GM10248 (cell line): ENCODE measurements at regions of chr1 and their contacts with region 1.

Region 1: DNA sequence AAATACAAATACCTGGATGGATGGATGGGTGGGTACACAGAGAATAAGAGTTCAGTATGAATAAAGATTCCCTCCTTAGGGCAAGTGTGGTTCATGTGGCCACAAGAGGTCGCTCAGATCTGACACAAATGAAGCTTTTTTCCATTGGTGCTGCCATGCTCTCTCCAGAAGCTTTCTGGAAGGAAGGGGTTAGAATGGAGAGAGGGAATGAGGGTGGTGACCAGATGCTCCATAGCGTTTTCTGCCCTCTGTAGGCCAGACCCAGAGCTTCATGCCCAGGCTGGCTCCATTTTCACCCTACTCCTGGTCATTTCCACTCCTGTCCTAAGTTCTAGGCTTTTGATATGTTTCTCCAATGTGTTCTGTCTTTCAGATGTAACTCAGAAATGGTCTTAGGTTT is 3.3 kb upstream of the FCRL6 start:
- DNase-seq: peak; percentile 67
- CTCF ChIP-seq: peak; percentile 57

Region 2: GRCh38 chr1:159580340-159580739 is 218.6 kb before region 1 on chr1:
- CTCF ChIA-PET with region 1: no interaction called
- POLR2A ChIA-PET with region 1: no interaction called
- DNase-seq: no peak
- CTCF ChIP-seq: no peak

Region 3: DNA sequence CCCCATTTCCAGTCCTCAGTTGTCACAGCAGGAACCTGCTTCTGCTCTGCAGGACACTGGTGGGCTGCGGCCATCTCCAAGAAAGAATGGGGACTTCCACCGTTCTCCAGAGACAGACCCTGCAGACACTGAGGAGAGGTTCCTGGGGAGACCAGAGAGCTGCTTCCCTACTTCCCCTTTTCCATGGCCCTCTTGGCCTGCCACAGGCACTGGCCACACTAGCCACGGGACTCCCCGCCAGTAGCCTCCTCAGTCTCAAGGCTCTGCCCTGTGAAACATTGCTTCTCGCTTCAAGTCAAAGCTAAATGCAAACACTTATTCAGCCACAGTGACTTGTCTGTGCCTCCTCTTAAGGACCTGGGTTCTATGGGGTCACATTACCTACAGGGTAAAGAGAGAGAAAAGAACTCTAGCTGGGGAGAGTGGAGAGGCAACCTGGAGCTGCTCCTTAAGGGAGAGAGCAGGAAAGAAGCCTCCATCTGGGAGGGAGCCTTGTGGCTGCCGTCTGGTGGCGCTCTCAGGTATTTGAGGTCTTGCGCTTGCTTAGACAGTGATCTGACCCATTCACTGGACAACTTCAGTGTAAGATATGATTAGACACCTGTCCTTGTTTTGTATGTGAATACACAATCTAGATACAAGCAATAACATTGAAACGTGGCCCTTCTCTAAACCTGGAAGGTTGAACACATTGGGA is 22.4 kb after region 1 on chr1:
- CTCF ChIA-PET with region 1: interaction called, 12 read pairs
- POLR2A ChIA-PET with region 1: no interaction called
- DNase-seq: no peak
- CTCF ChIP-seq: no peak

Region 4: GRCh38 chr1:159891275-159892157 is 92.6 kb after region 1 on chr1:
- CTCF ChIA-PET with region 1: interaction called, 302 read pairs
- POLR2A ChIA-PET with region 1: no interaction called
- DNase-seq: peak; percentile 71
- CTCF ChIP-seq: peak; percentile 98

Region 5: GRCh38 chr1:159945483-159946241 is 146.8 kb after region 1 on chr1 and contains the start of gene IGSF9:
- CTCF ChIA-PET with region 1: interaction called, 15 read pairs
- POLR2A ChIA-PET with region 1: no interaction called
- DNase-seq: peak; percentile 61
- CTCF ChIP-seq: peak; percentile 39

Region 6: GRCh38 chr1:160144921-160145320 is 346.0 kb after region 1 on chr1:
- CTCF ChIA-PET with region 1: no interaction called
- POLR2A ChIA-PET with region 1: no interaction called
- DNase-seq: no peak
- CTCF ChIP-seq: no peak